K562 (cell line): ENCODE measurements at regions of chr2 and their contacts with region 1.

Region 1: DNA sequence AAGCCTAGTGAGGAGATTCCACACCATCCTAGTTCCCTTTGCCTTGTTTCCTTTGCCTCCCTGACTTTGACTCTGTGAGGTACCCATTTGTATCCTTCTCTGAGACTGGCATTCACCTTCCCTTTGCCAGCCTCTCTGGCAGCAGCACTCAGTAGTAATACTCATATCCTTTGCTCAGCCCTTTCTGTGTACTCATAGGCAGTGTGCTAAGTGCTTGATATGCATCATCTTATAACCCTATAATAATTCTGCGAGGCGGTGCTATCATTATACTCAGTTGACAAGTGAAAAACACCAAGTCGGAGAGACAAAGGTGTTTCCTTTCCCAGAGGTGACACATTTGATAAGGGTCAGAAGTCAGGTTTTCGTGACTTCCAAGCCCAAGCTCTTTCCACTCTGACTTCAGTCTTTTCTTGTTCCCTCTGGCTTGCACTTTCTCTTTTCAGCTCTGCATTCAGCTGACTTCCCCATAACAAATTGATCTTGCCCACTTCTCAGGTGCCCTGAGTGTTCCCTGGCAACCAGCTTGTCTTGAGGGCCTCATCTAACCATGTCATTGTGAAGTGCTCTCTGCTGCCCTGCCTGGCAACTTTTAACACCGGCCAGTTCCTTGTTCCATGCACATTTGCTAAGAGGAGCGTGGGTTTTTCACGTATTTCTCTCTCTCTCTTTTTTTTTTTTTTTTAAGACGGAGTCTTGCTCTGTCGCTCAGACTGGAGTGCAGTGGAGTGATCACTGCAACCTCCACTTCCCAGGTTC is 94.5 kb upstream of the UPP2 start:
- DNase-seq: peak in 1 of 4 experiments; percentile 26
- ATAC-seq: peak; percentile 64
- H3K4me3 ChIP-seq: no peak overlapping the region
- H3K27ac ChIP-seq: no peak overlapping the region
- H3K4me1 ChIP-seq: peaks cover 0 to 12% of the 10 kb centered on the region in 2 experiments; a peak in 2 of 5 replicates
- H3K27me3 ChIP-seq: no peaks in the 10 kb centered on the region
- CTCF ChIP-seq: peak; percentile 15 to 37 (median 29); a peak in 1 of 6 replicates
- EP300 ChIP-seq: no peak
- POLR2A ChIP-seq: no peak
- RAD21 ChIP-seq: peak in 1 of 2 experiments; percentile 18; a peak in 1 of 4 replicates

Region 2: GRCh38 chr2:157492189-157492773 is 514.9 kb before region 1 on chr2:
- CTCF ChIA-PET with region 1: interaction called, 14 read pairs
- POLR2A ChIA-PET with region 1: no interaction called
- in situ Hi-C with region 1: loop called (anchors 5 kb)
- intact Hi-C with region 1: loop called (anchors 1 kb)
- DNase-seq: peak; percentile 29 to 78 (median 54)
- ATAC-seq: peak; percentile 98
- H3K4me3 ChIP-seq: no peak overlapping the region
- H3K27ac ChIP-seq: no peak overlapping the region
- H3K4me1 ChIP-seq: no peaks in the 10 kb centered on the region
- H3K27me3 ChIP-seq: peaks cover 0 to 4% of the 10 kb centered on the region in 2 experiments; a peak in 1 of 5 replicates
- CTCF ChIP-seq: peak; percentile 84 to 94 (median 87)
- EP300 ChIP-seq: no peak
- POLR2A ChIP-seq: no peak
- RAD21 ChIP-seq: peak; percentile 92 to 96

Region 3: GRCh38 chr2:157596992-157597681 is 410.0 kb before region 1 on chr2:
- CTCF ChIA-PET with region 1: no interaction called
- POLR2A ChIA-PET with region 1: no interaction called
- in situ Hi-C with region 1: no loop called
- intact Hi-C with region 1: loop called (anchors 10 kb)
- DNase-seq: peak in 2 of 4 experiments; percentile 34 to 38
- ATAC-seq: peak; percentile 90
- H3K4me3 ChIP-seq: no peak overlapping the region
- H3K27ac ChIP-seq: no peak overlapping the region
- H3K4me1 ChIP-seq: peaks cover 0 to 5% of the 10 kb centered on the region in 2 experiments; a peak in 1 of 5 replicates
- H3K27me3 ChIP-seq: peaks cover 0 to 9% of the 10 kb centered on the region in 2 experiments; a peak in 4 of 5 replicates
- CTCF ChIP-seq: peak; percentile 56 to 63 (median 60)
- EP300 ChIP-seq: no peak
- POLR2A ChIP-seq: no peak
- RAD21 ChIP-seq: peak in 1 of 2 experiments; percentile 60; a peak in 2 of 4 replicates

Region 4: GRCh38 chr2:157784169-157784822 is 222.8 kb before region 1 on chr2:
- CTCF ChIA-PET with region 1: interaction called, 44 read pairs
- POLR2A ChIA-PET with region 1: no interaction called
- in situ Hi-C with region 1: loop called (anchors 5 kb)
- intact Hi-C with region 1: loop called (anchors 1 kb)
- DNase-seq: peak in 2 of 4 experiments; percentile 24 to 29
- ATAC-seq: no peak
- H3K4me3 ChIP-seq: no peak overlapping the region
- H3K27ac ChIP-seq: peak overlapping the region; percentile 37; the same call in 2 of the 3 replicates
- H3K4me1 ChIP-seq: peaks cover 22 to 66% of the 10 kb centered on the region in 2 experiments
- H3K27me3 ChIP-seq: no peaks in the 10 kb centered on the region
- CTCF ChIP-seq: no peak
- EP300 ChIP-seq: peak; percentile 76
- POLR2A ChIP-seq: no peak
- RAD21 ChIP-seq: 0 out of 4 replicates have a peak, but pooled peaks of 1 of the 2 experiments have one; percentile 3

Region 5: GRCh38 chr2:157876066-157876787 is 130.9 kb before region 1 on chr2 and contains the start of gene ACVR1:
- CTCF ChIA-PET with region 1: interaction called, 3 read pairs
- POLR2A ChIA-PET with region 1: interaction called, 3 read pairs
- in situ Hi-C with region 1: no loop called
- intact Hi-C with region 1: loop called (anchors 10 kb)
- DNase-seq: peak; percentile 93 to 98 (median 94)
- ATAC-seq: peak; percentile 90
- H3K4me3 ChIP-seq: peak within 1 kb of the TSS; percentile 67
- H3K27ac ChIP-seq: peak within 1 kb of the TSS; percentile 73
- H3K4me1 ChIP-seq: peaks cover 8 to 19% of the 10 kb centered on the region in 2 experiments
- H3K27me3 ChIP-seq: no peaks in the 10 kb centered on the region
- CTCF ChIP-seq: peak; percentile 27 to 54 (median 42); a peak in 5 of 6 replicates
- EP300 ChIP-seq: peak; percentile 38; the same call in 1 of the 2 replicates
- POLR2A ChIP-seq: peak; percentile 80
- RAD21 ChIP-seq: peak in 1 of 2 experiments; percentile 54; a peak in 2 of 4 replicates
- polyA plus RNA-seq, gene ACVR1: 4.7 to 7.9 TPM

Region 6: DNA sequence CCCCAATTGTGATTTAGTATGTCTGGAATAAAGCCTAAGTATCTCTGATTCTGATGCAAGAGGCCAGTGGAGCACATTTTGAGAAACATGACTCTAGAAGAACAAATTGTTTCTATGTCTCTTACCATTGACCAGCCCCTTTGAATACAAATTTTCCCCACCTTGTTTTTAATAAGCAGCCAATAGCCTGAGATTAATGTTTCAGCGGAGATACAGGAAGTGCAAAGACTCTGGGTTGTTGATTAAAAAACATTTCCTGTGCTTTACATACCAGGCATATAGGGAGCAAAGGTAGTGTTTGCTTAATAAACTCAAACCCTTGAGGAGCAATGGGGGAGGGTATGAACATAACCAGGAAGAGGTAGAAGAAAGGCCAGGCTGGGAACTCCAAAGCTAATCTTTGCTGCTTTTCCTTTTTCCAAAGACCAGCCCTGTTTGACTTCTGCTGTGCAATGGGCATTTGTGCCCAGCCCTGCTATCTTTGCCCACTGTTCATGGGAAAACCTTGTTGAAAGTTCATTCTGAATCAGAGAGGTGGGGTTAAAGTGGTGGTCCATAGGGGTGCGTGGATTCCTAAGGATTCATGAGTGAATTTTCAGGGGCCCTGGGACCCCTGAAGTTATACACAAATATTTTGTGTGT is 123.8 kb after region 1 on chr2:
- CTCF ChIA-PET with region 1: no interaction called
- POLR2A ChIA-PET with region 1: no interaction called
- in situ Hi-C with region 1: no loop called
- intact Hi-C with region 1: no loop called
- DNase-seq: no peak
- ATAC-seq: no peak
- H3K4me3 ChIP-seq: no peak overlapping the region
- H3K27ac ChIP-seq: no peak overlapping the region
- H3K4me1 ChIP-seq: no peaks in the 10 kb centered on the region
- H3K27me3 ChIP-seq: peaks cover 8 to 14% of the 10 kb centered on the region in 2 experiments; a peak in 3 of 5 replicates
- CTCF ChIP-seq: no peak
- EP300 ChIP-seq: no peak
- POLR2A ChIP-seq: no peak
- RAD21 ChIP-seq: no peak

Region 7: GRCh38 chr2:158291544-158292180 is 284.5 kb after region 1 on chr2:
- CTCF ChIA-PET with region 1: no interaction called
- POLR2A ChIA-PET with region 1: no interaction called
- in situ Hi-C with region 1: no loop called
- intact Hi-C with region 1: no loop called
- DNase-seq: no peak
- ATAC-seq: no peak
- H3K4me3 ChIP-seq: no peak overlapping the region
- H3K27ac ChIP-seq: no peak overlapping the region
- H3K4me1 ChIP-seq: no peaks in the 10 kb centered on the region
- H3K27me3 ChIP-seq: no peaks in the 10 kb centered on the region
- CTCF ChIP-seq: no peak
- EP300 ChIP-seq: no peak
- POLR2A ChIP-seq: no peak
- RAD21 ChIP-seq: no peak

Region 8: DNA sequence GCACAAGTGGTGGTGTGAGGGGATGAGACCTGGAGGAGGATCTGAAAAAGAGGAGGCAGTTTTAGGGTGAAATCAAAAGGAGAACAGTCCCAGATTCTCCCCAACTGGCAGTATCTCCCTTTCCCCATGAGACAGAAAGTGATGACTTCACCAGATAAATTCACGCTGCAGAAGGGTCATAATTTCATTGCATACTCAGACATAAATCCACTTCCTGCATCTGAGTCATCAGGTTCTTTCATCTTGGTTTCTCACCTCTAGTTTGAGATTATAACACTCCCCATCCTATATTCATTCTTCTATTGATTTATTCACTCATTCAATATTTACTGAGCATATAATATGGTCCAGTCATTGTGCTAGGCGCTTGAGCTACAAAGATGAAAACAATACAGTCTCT is 384.7 kb after region 1 on chr2:
- CTCF ChIA-PET with region 1: no interaction called
- POLR2A ChIA-PET with region 1: no interaction called
- in situ Hi-C with region 1: no loop called
- intact Hi-C with region 1: no loop called
- DNase-seq: peak in 1 of 4 experiments; percentile 11
- ATAC-seq: no peak
- H3K4me3 ChIP-seq: no peak overlapping the region
- H3K27ac ChIP-seq: no peak overlapping the region
- H3K4me1 ChIP-seq: no peaks in the 10 kb centered on the region
- H3K27me3 ChIP-seq: no peaks in the 10 kb centered on the region; a peak in 1 of 5 replicates
- CTCF ChIP-seq: no peak
- EP300 ChIP-seq: no peak
- POLR2A ChIP-seq: no peak
- RAD21 ChIP-seq: no peak

Region 9: DNA sequence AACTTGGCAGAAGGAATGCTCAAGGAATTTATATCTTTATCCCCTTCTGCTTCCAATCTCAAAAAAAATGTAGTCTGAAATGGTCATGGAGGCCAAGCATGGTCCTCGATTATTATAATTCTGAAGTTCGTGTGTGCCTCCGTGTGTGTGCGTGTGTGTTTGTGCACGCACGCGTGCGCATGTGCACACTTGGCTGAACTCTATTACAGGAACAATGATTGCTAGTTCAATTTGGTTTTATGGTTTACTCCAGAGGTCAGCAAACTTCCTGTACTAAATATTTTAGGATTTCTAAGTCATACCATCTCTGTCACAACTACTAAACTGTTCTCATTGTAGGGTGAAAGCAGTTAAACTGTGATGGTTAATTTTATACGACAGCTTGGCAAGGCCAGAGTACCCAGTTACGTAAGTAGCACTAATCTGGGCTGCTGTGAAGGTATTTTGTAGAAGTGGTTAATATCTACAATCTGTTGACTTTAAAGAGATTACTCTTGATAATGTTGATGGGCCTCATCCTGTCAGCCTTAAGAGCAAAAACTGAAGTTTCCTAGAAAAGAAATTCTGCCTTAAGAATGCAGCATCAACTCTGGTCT is 1699.3 kb after region 1 on chr2:
- CTCF ChIA-PET with region 1: no interaction called
- POLR2A ChIA-PET with region 1: no interaction called
- in situ Hi-C with region 1: no loop called
- intact Hi-C with region 1: no loop called
- DNase-seq: no peak
- ATAC-seq: no peak
- H3K4me3 ChIP-seq: no peak overlapping the region
- H3K27ac ChIP-seq: no peak overlapping the region
- H3K4me1 ChIP-seq: peaks cover 0 to 6% of the 10 kb centered on the region in 2 experiments; a peak in 3 of 5 replicates
- H3K27me3 ChIP-seq: no peaks in the 10 kb centered on the region
- CTCF ChIP-seq: no peak
- EP300 ChIP-seq: no peak
- POLR2A ChIP-seq: no peak
- RAD21 ChIP-seq: no peak